MCF 10A (cell line): ENCODE measurements at regions of chr2 and their contacts with region 1.

Region 1: DNA sequence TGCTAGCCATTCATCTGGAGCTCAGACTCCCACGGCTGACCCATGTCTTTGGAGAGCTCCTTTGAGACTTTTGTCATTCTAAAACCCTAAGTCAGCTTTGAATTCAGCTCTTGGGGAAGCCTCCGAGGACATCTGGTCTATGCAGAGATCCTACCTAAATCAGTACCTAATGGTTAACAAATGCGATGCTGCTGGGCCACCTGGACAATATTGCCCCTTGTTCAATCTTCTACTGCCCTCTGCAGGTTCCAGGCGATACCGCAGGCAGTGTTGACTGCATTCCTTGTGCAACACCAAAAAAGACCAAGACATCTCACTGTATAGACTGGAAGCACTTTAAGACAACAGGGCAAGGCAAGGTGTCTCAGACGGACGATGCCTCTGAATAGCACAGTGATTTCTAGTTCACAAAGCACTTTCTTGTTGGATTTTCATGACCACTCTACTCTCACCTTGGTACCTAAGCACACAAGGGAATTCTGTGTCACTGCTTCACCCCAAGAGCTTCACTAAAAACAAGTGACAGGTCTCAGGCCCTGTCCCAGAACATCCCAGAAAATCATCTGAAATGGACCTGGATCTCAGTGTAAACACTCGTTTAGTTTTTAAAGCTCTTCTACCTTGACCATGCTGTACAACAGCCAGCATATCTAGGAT is 80.9 kb downstream of the XDH start:
- DNase-seq: peak; percentile 83
- H3K4me3 Mint-ChIP-seq: no peak overlapping the region
- H3K27ac Mint-ChIP-seq: no peak overlapping the region
- H3K4me1 Mint-ChIP-seq: peaks cover 31% of the 10 kb centered on the region
- H3K27me3 Mint-ChIP-seq: no peaks in the 10 kb centered on the region
- CTCF ChIP-seq: peak; percentile 96

Region 2: DNA sequence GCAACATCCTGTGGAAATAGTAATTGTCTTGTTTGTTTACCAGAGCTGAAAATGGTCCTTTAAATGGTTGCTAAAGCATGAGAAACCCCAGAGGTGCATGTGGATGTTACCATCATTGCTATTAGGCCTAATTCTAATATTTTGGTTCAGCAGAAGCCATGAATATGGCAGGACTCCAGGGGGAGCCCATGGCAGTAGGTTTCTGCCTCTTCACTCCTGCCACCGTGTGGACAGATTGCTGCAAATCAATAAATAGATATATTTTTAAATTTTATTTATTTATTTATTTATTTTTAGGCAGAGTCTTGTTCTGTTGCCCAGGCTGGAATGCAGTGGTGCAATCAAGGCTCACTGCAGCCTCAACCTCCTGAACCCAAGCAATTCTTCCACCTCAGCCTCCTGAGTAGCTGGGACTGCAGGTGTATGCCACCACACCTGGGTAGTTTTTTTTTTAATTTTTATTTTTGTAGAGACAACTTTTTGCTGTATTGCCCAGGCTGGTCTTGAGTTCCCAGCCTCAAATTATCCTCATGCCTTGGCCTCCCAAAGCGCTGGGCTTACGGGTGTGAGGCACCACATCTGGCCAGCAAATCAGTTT is 471.5 kb before region 1 on chr2:
- CTCF ChIA-PET with region 1: interaction called, 11 read pairs
- POLR2A ChIA-PET with region 1: no interaction called
- intact Hi-C with region 1: loop called (anchors 1 kb)
- DNase-seq: peak; percentile 83
- H3K4me3 Mint-ChIP-seq: no peak overlapping the region
- H3K27ac Mint-ChIP-seq: no peak overlapping the region
- H3K4me1 Mint-ChIP-seq: no peaks in the 10 kb centered on the region
- H3K27me3 Mint-ChIP-seq: no peaks in the 10 kb centered on the region
- CTCF ChIP-seq: peak; percentile 79

Region 3: GRCh38 chr2:31097962-31098613 is 235.6 kb before region 1 on chr2:
- CTCF ChIA-PET with region 1: no interaction called
- POLR2A ChIA-PET with region 1: no interaction called
- intact Hi-C with region 1: no loop called
- DNase-seq: no peak
- H3K4me3 Mint-ChIP-seq: no peak overlapping the region
- H3K27ac Mint-ChIP-seq: no peak overlapping the region
- H3K4me1 Mint-ChIP-seq: no peaks in the 10 kb centered on the region
- H3K27me3 Mint-ChIP-seq: no peaks in the 10 kb centered on the region
- CTCF ChIP-seq: no peak

Region 4: DNA sequence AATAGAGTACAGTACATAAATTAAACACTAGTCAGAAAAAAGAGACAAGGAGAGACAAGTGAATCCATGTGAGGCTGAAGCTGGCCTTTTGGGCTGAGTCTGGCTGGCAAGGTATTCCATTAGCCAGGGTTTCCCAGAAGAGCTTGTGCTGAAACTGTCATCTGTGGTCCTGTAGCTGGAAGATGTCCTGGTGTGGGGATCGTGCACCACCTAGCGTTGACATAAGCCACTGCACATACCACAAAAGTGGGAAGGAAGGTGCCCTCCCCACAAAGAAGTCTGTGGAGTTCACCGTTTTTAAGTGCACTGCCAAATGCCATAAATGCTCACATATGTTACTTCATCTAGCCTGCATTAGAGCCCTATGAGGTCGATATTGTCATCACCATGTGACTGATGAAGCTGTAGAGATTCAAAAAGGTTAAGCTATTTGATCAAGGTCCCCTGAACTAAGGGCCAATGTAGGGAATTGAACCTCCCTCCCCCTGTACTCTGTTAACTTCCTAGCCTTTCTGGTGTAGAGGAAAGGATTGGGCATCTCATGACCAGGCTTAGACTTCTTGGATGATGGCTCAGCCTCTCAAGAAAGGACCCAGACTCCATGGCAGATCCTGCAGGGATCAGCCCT is 163.5 kb before region 1 on chr2:
- CTCF ChIA-PET with region 1: interaction called, 34 read pairs
- POLR2A ChIA-PET with region 1: no interaction called
- intact Hi-C with region 1: loop called (anchors 1 kb)
- DNase-seq: peak; percentile 71
- H3K4me3 Mint-ChIP-seq: no peak overlapping the region
- H3K27ac Mint-ChIP-seq: no peak overlapping the region
- H3K4me1 Mint-ChIP-seq: no peaks in the 10 kb centered on the region
- H3K27me3 Mint-ChIP-seq: peaks cover 18% of the 10 kb centered on the region
- CTCF ChIP-seq: peak; percentile 96

Region 5: GRCh38 chr2:31300309-31300708 is 33.3 kb before region 1 on chr2:
- CTCF ChIA-PET with region 1: interaction called, 11 read pairs
- POLR2A ChIA-PET with region 1: no interaction called
- intact Hi-C with region 1: no loop called
- DNase-seq: no peak
- H3K4me3 Mint-ChIP-seq: no peak overlapping the region
- H3K27ac Mint-ChIP-seq: no peak overlapping the region
- H3K4me1 Mint-ChIP-seq: no peaks in the 10 kb centered on the region
- H3K27me3 Mint-ChIP-seq: no peaks in the 10 kb centered on the region
- CTCF ChIP-seq: no peak

Region 6: DNA sequence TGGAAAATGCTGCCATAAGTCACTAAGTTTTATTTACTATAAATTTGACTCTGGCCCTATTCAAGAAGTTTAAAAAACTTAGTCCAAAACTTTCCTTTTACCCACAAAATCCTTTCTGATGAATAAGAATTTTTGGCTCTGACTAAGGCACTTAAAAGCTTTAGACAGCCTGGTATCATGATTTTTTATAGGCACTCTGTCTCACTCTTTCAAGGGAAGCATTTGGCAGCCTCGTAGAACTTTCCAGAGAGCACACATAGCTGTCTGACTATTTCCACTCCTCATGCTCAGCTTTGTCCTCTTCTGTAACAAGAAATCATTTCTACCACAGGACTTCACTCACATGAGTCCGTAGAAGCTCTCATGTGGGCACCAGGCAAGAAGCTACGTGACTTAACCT is 113.2 kb after region 1 on chr2:
- CTCF ChIA-PET with region 1: no interaction called
- POLR2A ChIA-PET with region 1: no interaction called
- intact Hi-C with region 1: no loop called
- DNase-seq: no peak
- H3K4me3 Mint-ChIP-seq: no peak overlapping the region
- H3K27ac Mint-ChIP-seq: no peak overlapping the region
- H3K4me1 Mint-ChIP-seq: no peaks in the 10 kb centered on the region
- H3K27me3 Mint-ChIP-seq: no peaks in the 10 kb centered on the region
- CTCF ChIP-seq: no peak

Region 7: DNA sequence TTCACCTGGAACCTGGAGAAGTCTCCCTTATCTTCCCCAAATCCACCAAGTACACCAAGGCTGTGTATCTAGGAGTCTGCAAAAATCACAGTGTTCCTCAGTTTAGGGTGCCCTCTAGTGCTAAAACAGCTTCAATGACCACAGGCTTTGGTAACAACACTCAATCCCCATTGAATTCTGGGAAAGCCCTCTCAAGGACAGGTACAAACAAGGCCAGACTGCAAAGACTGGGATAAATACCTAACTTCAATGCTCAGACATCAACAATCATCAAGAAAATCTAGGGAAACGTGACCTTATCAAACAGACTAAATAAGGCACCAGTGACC is 396.1 kb after region 1 on chr2:
- CTCF ChIA-PET with region 1: interaction called, 9 read pairs
- POLR2A ChIA-PET with region 1: no interaction called
- intact Hi-C with region 1: loop called (anchors 10 kb)
- DNase-seq: peak; percentile 68
- H3K4me3 Mint-ChIP-seq: no peak overlapping the region
- H3K27ac Mint-ChIP-seq: no peak overlapping the region
- H3K4me1 Mint-ChIP-seq: no peaks in the 10 kb centered on the region
- H3K27me3 Mint-ChIP-seq: no peaks in the 10 kb centered on the region
- CTCF ChIP-seq: peak; percentile 65